GM10248 (cell line): ENCODE measurements at regions of chr2 and their contacts with region 1.

Region 1: DNA sequence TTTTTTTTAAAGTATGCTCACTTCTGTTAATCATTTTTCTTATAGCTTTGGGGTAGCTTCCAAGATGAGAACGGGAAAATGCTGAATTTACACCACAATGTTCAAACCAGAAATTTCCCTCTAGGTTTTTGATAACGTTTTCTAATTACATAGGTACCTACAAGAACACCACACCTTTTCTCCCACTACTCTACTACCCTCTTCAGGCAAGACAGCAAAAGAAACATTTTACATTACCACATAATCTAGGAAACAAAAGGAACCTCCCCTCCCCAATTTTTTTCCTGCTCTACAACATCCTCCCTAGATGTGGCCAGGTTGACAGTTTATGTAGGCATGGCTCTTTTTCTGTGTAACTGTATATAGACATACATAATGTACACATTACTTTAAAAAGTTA is 32.4 kb downstream of the NDUFAF7 start:
- DNase-seq: no peak
- CTCF ChIP-seq: no peak

Region 2: GRCh38 chr2:37250869-37251740 is 12.7 kb before region 1 on chr2:
- CTCF ChIA-PET with region 1: interaction called, 10 read pairs
- POLR2A ChIA-PET with region 1: no interaction called
- DNase-seq: no peak
- CTCF ChIP-seq: no peak